H1 (cell line): ENCODE measurements at regions of chr2 and their contacts with region 1.

Region 1: GRCh38 chr2:104733544-104733943 is 120.4 kb upstream of the POU3F3 start:
- DNase-seq: peak; percentile 54 to 76
- H3K4me3 ChIP-seq: no peak overlapping the region
- H3K27ac ChIP-seq: no peak overlapping the region
- H3K4me1 ChIP-seq: no peaks in the 10 kb centered on the region
- H3K27me3 ChIP-seq: 0 out of 7 replicates have a peak, but pooled peaks cover 0 to 2% (median 0%) of the 10 kb centered on the region in 4 experiments
- CTCF ChIP-seq: peak; percentile 81 to 96 (median 95)
- EP300 ChIP-seq: no peak
- POLR2A ChIP-seq: no peak
- RAD21 ChIP-seq: peak; percentile 76 to 81

Region 2: DNA sequence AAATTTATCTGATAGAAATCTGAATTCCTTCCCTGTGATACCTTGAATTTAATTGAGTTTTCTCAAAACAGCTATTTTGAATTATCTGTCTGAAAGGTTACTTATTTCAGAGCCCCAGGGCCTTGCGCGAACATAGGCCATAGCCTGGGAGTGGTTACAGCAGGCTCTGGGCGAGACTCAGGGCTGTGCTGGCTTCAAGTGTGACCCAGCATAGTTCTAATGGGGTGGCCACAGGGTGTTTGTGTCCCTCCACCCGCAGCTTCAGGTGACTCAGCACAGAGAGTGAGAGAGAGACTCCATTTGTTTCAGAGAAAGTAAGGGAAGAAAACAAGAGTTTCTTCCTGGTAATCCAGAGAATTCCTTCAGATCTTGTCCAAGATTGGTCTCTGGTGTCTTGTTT is 17.5 kb before region 1 on chr2:
- CTCF ChIA-PET with region 1: interaction called, 14 read pairs
- POLR2A ChIA-PET with region 1: no interaction called
- DNase-seq: no peak
- H3K4me3 ChIP-seq: no peak overlapping the region
- H3K27ac ChIP-seq: no peak overlapping the region
- H3K4me1 ChIP-seq: no peaks in the 10 kb centered on the region
- H3K27me3 ChIP-seq: no peaks in the 10 kb centered on the region
- CTCF ChIP-seq: no peak
- EP300 ChIP-seq: no peak
- POLR2A ChIP-seq: no peak
- RAD21 ChIP-seq: no peak

Region 3: DNA sequence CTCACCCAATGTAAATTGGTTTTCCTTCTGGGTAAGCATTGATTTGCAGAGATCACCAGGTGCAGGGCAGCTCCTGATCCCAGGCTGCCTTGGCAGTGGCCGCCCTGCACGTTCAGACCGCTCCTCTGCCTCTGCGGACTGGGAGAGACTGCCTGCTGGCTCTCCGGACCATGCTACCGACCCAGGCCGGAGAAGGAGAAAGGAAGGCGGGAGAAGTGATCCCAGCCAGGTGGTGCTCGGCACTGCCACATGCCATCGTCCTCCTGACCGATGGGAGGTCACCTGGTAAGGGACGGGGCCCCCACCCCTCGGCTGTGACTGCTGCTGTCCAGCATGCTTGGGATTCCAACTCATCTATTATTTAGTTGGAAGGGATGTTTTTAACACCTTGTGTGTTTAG is 12.3 kb after region 1 on chr2:
- CTCF ChIA-PET with region 1: interaction called, 20 read pairs
- POLR2A ChIA-PET with region 1: no interaction called
- DNase-seq: no peak
- H3K4me3 ChIP-seq: no peak overlapping the region
- H3K27ac ChIP-seq: no peak overlapping the region
- H3K4me1 ChIP-seq: peaks cover 0 to 15% (median 3%) of the 10 kb centered on the region in 4 experiments; a peak in 5 of 7 replicates
- H3K27me3 ChIP-seq: no peaks in the 10 kb centered on the region; a peak in 1 of 7 replicates
- CTCF ChIP-seq: no peak
- EP300 ChIP-seq: no peak
- POLR2A ChIP-seq: no peak
- RAD21 ChIP-seq: no peak